RWPE1 (cell line): ENCODE measurements at regions of chr19 and their contacts with region 1.

Region 1: GRCh38 chr19:48795055-48795684 is 15.7 kb downstream of the BCAT2 start:
- DNase-seq: peak; percentile 94
- H3K27ac ChIP-seq: peak overlapping the region; percentile 86
- CTCF ChIP-seq: peak; percentile 94

Region 2: DNA sequence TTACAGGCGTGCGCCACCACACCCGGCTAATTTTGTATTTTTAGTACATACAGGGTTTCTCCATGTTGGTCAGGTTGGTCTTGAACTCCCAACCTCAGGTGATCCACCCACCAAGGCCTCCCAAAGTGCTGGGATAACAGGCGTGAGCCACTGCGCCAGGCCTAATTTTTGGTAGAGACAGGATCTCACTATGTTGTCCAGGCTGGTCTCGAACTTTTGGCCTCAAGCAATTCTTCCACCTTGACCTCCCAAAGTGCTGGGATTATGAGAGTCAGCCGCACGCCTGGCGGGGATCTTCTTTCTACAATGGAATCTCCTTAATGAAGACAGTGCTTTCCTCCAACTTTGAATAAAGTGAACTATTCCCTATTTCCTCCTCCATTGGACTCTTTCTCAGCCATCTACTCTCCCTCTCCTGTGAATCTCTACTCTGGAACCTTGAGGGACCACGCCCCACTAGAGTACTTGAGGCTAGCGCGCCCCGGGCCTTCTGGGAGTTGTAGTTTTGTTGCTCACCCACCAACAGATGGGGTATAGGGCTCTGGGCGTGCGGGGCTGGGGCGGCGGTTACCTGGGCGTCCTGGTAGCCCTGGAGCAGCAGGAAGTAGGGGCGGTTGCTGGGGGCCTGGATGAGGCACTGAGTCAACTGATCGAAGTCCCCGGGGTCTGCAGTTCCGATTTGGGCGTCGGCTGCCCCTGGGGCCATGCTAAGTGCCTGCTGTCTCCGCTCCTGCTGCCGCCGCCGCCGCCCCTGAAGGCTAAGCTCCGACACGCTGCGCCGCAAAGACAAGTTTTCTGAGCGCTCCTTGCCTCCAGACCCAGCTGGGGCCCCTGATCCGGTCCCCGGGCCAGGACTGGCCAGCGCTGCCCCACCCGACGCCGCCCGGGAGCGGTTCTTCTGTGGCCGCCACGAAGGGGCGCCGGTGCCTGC is 60.3 kb before region 1 on chr19:
- CTCF ChIA-PET with region 1: no interaction called
- POLR2A ChIA-PET with region 1: no interaction called
- DNase-seq: no peak
- H3K27ac ChIP-seq: no peak overlapping the region
- CTCF ChIP-seq: no peak

Region 3: GRCh38 chr19:48835734-48836088 is 40.5 kb after region 1 on chr19:
- CTCF ChIA-PET with region 1: interaction called, 58 read pairs
- POLR2A ChIA-PET with region 1: no interaction called
- DNase-seq: peak; percentile 82
- H3K27ac ChIP-seq: peak overlapping the region; percentile 66
- CTCF ChIP-seq: peak; percentile 87

Region 4: GRCh38 chr19:48842789-48843162 is 47.6 kb after region 1 on chr19:
- CTCF ChIA-PET with region 1: interaction called, 58 read pairs
- POLR2A ChIA-PET with region 1: interaction called, 3 read pairs
- DNase-seq: peak; percentile 36
- H3K27ac ChIP-seq: peak overlapping the region; percentile 5; the same call in 1 of the 2 replicates
- CTCF ChIP-seq: peak; percentile 86

Region 5: DNA sequence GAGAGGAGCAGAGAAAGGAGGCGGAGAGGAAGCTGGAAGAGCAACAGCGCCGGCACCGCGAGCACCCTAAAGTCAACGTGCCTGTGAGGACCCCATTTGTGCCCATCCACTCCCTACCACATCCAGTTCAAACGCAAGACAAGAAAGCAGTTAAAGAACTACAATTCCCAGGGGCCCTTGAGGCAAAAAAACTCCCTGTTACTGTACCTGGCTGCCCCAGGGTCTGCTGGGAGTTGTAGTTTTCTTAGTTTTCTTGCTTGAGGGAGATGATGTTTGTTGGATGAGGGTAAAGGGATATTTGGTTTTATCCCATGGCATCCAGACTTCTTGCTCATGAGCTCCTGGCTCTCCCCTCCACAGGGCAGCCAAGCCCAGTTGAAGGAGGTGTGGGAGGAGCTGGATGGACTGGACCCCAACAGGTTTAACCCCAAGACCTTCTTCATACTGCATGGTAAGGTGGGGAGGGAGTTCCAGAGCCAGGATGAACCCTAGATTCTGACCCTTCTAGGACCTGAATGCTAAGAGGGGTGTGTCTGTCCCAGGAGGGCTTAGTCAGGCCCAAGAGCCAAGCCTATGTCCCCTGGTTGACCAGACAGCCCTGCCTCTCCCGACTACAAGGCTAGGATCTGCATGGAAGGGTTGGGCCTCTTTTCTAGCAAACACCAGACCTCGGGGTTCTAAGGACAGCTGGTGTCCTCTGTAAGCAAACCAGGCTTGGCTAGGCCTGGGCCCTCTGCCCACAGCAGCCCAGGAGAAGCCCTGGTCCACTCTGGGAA is 118.1 kb after region 1 on chr19:
- CTCF ChIA-PET with region 1: no interaction called
- POLR2A ChIA-PET with region 1: no interaction called
- DNase-seq: no peak
- H3K27ac ChIP-seq: 0 out of 2 replicates have a peak overlapping the region, but pooled peaks have one; percentile 7
- CTCF ChIP-seq: no peak